ENCODE measurements at regions of chr5 and their contacts with region 1.

Region 1: DNA sequence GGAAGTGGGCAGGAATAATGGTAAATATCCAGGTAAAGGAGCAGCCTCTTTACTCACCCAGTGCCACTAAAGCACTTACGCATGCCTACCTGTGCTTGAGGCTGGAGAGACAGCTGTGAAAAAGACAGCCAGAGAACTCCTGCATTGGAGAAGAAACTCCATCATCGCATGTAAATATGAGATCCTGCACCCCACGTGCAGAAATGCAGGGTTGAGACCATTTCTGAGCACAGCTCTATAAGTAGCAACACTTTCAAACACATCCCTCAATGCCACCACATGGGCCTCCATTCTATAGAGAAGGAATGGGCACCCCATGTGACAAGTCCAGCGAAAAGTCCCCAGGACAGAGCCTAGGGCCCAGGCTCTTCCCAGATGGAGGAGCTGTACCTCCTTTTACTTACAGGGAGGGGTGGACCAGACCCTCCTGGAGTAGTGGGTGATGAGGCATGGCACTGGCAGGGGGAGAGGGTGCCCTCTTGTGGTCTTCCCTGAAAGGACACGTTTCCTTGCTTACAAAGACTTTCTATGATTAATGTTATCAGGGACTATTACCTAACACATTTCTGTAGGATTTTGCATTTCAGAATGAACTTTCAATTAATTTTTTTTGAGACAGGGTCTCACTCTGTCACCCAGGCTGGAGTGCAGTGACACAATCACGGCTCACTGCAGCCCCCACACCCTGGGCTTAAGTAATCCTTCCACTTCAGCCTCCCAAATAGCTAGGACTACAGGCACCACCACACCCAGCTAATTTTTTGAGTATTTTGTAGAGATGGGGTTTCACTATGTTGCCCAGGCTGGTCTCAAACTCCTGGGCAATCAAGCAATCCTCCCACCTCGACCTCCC is 55.3 kb upstream of the IL17B start:
- DNase-seq: peak in 4 of 5 donors; percentile 34 to 42 (median 38)
- H3K4me3 ChIP-seq: no peak overlapping the region
- H3K4me3 Mint-ChIP-seq: no peak overlapping the region
- H3K27ac ChIP-seq: no peak overlapping the region
- H3K27ac Mint-ChIP-seq: no peak overlapping the region
- H3K4me1 ChIP-seq: peaks cover 3% of the 10 kb centered on the region
- H3K4me1 Mint-ChIP-seq: peaks cover 0 to 11% (median 6%) of the 10 kb centered on the region in 4 donors
- H3K27me3 ChIP-seq: no peaks in the 10 kb centered on the region
- H3K27me3 Mint-ChIP-seq: no peaks in the 10 kb centered on the region

Region 2: GRCh38 chr5:149381987-149382340 is 52.4 kb before region 1 on chr5:
- CTCF ChIA-PET with region 1: interaction called, 17 read pairs
- POLR2A ChIA-PET with region 1: no interaction called
- intact Hi-C with region 1: no loop called
- DNase-seq: peak; percentile 50 to 56 (median 54)
- H3K4me3 ChIP-seq: no peak overlapping the region
- H3K4me3 Mint-ChIP-seq: no peak overlapping the region
- H3K27ac ChIP-seq: no peak overlapping the region
- H3K27ac Mint-ChIP-seq: peak overlapping the region in 3 of 7 donors; percentile 43 to 58 (median 53)
- H3K4me1 ChIP-seq: no peaks in the 10 kb centered on the region
- H3K4me1 Mint-ChIP-seq: peaks cover 0 to 4% (median 1%) of the 10 kb centered on the region in 4 donors
- H3K27me3 ChIP-seq: no peaks in the 10 kb centered on the region
- H3K27me3 Mint-ChIP-seq: peaks cover 3 to 4% of the 10 kb centered on the region in 2 donors

Region 3: GRCh38 chr5:149392718-149393117 is 41.7 kb before region 1 on chr5:
- CTCF ChIA-PET with region 1: no interaction called
- POLR2A ChIA-PET with region 1: no interaction called
- intact Hi-C with region 1: no loop called
- DNase-seq: no peak
- H3K4me3 ChIP-seq: no peak overlapping the region
- H3K4me3 Mint-ChIP-seq: no peak overlapping the region
- H3K27ac ChIP-seq: no peak overlapping the region
- H3K27ac Mint-ChIP-seq: no peak overlapping the region
- H3K4me1 ChIP-seq: no peaks in the 10 kb centered on the region
- H3K4me1 Mint-ChIP-seq: no peaks in the 10 kb centered on the region
- H3K27me3 ChIP-seq: no peaks in the 10 kb centered on the region
- H3K27me3 Mint-ChIP-seq: no peaks in the 10 kb centered on the region

Region 4: DNA sequence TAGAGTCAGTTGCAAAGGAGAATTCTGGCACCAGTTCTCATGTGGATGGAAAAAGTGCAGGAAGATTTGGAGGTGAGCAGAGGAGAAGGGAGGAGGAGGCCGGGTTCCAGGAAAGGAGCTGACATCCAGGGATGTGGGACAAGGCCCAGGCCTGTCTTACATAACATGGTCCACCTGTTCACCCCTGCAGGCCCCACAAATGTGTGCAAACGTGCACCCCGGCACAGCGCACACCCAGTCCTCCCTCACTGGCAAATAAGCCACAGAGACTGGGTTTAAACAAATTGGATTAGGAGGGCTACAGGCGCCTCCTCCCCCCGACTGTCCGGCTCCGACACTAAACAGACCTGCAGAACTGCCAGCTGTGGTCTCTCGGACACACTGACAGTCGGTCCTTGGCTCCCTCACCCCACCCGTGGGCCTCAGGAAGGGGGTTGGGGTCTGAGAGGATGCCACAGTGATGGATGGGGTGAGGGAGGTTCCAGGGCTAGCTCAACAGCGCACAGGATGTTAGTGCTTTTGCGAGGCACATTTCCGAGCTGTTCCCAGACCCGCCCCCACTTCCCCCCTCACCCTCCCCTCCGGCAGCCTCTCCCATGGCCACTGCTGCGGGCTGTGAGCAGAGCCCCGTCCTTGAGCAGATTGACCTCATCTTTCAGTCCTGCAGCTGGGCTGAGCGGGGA is 11.9 kb before region 1 on chr5:
- CTCF ChIA-PET with region 1: interaction called, 16 read pairs
- POLR2A ChIA-PET with region 1: no interaction called
- intact Hi-C with region 1: no loop called
- DNase-seq: no peak
- H3K4me3 ChIP-seq: no peak overlapping the region
- H3K4me3 Mint-ChIP-seq: no peak overlapping the region
- H3K27ac ChIP-seq: no peak overlapping the region
- H3K27ac Mint-ChIP-seq: peak overlapping the region in 1 of 7 donors; percentile 9
- H3K4me1 ChIP-seq: no peaks in the 10 kb centered on the region
- H3K4me1 Mint-ChIP-seq: peaks cover 0 to 4% (median under 1%) of the 10 kb centered on the region in 4 donors
- H3K27me3 ChIP-seq: no peaks in the 10 kb centered on the region
- H3K27me3 Mint-ChIP-seq: peaks cover 2 to 11% of the 10 kb centered on the region in 2 donors